ENCODE measurements at regions of chr1 and their contacts with region 1.

Region 1: DNA sequence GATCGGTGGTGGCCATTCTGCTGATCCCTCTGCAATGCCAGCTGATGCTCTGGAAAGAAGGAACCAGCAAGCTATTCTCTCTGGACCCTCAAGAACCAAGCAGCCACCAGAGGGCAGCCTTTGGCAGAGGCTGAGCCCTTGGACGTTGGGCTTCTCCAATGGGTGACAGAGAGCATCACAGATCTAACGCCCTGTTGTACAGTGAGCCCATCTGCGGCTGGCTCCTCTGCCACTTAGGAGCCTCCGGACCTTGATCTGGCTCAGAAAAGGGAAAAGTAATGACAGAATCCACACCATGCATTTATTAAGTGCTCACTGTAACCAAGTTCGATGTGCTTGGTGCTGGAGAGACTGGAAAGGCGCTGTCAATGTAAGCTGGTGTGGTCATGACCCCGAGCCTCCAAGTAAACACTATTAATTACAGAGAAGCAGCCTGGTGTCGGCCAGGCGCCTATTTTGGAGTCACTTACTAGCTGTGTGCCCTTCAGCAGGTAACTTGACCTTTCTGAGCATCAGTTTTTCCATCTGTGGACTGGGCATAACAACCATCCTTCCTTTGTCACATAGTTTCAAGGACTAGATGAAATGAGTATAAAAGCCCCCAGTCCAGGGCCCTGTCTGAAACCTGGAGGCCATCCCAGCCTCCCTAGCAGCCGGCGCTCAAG is 34.9 kb downstream of the ECE1 start:
- DNase-seq: peak; percentile 83 to 99 (median 96)

Region 2: DNA sequence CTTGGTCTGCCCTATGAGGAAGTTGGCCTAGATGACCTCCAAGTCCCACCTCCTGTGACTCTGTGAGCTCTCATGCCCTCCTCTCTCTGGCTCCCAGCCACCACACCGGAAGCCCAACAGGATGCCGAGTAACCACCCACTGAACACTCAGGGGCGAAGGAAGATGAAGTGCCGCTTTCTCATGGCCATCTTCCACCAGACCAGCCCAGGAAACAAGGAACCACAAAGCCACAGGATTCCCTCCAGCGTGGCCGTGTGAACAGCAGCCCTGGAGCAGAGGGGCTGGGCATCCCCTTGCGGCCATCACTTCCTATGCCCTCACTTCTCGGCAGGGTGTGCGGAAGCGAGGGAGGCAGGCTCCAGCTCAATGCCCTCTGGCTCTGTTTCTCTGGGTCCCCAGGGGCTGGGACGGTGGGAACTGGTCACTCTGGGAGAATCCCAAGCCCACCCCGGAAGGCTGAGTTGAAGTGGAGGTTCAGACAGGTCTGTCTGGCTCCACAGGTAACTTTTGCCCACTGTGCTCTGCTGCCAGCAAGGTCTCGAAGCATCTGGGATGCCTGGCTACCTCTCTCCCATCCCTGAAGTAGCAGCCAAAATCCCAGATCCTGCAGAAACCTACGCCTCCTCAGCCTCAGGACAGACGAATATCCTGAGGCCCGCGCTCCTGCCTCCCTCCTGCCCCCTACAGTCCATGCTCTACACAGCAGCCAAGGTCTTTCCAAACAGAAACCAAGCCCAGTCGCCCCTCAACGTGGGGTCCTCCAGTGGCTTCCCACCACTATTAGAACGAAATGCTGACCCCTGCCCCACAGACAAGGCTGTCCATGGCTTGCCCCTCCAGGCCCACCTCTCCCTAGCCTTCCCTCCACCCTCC is 79.0 kb after region 1 on chr1:
- intact Hi-C with region 1: loop called (anchors 2 kb)
- DNase-seq: peak in 9 of 10 donors; percentile 53 to 93 (median 68)

Measured in posterior cingulate gyrus (tissue), 11 donors.